ENCODE measurements at regions of chr20 and their contacts with region 1.

Region 1: DNA sequence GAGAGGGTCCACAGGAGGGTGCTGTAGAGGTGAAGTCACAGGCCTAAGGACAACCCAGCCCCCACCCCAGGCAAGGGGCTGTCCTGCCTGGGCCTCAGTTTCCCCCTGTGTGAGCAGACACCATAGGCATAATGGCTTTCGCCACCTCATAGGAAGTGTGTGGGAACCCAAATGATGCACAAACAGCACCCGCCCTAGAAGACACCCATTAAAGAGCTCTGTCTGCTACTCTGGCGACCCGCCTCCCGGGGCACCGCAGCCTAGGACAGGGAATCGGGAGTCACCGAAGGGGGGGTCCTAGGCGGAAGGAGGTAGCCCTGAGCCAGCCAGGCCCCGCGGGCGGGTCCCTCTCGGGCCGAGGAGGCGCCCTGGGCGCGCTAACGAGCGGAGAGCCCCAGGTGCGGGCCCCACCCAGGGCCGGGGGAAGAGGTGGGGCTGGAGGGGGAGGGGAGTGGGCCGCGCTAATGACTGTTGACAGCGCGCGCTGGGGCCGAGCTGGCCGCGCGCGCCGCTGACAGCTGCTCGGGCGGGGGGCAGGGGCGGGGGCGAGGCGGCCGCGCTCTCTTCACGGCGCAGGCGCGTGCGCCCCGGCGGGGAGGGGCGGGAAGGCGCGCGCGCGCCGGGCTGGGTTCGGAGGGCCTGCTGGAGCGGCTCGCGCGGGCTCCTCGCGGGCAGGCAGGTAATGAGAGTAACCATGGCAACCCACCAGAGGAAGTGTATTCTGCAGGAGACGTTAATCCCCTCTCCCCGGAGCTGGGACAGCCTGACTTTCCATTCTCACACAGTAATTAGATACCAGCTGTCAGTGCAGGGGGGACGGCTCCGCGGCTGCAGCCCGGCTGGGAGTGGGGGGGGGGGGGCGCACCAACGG is 48.9 kb downstream of the NOL4L start:
- DNase-seq: peak; percentile 88
- H3K4me3 Mint-ChIP-seq: peak overlapping the region; percentile 67
- H3K27ac Mint-ChIP-seq: peak overlapping the region; percentile 91
- H3K4me1 Mint-ChIP-seq: peaks cover 85% of the 10 kb centered on the region
- H3K27me3 Mint-ChIP-seq: no peaks in the 10 kb centered on the region

Region 2: GRCh38 chr20:32285621-32286371 is 250.4 kb before region 1 on chr20:
- CTCF ChIA-PET with region 1: interaction called, 4 read pairs
- intact Hi-C with region 1: loop called (anchors 2 kb)
- DNase-seq: peak; percentile 78
- H3K4me3 Mint-ChIP-seq: peak overlapping the region; percentile 60
- H3K27ac Mint-ChIP-seq: peak overlapping the region; percentile 92
- H3K4me1 Mint-ChIP-seq: peaks cover 88% of the 10 kb centered on the region
- H3K27me3 Mint-ChIP-seq: no peaks in the 10 kb centered on the region

Region 3: DNA sequence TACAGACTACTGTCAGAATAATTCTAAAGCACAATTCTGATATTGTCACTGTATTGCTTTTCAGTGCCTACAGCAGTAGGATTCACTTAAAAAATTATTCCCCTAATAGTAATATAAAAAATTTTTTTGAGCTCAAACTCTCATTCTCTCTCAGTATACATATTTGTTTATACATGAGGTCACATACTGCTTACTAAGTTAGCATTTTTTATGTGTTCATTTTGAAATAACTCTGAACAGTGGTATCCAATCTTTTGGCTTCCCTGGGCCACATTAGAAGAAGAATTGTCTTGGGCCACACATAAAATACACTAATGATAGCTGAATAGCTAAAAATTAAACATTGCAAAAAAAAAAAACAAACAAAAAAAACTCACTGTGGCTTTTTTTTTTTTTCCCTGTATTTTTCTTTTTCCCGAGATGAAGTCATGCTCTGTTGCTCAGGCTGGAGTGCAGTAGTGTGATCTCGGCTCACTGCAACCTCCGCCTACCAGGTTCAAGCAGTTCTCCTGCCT is 139.5 kb before region 1 on chr20:
- CTCF ChIA-PET with region 1: no interaction called
- intact Hi-C with region 1: no loop called
- DNase-seq: no peak
- H3K4me3 Mint-ChIP-seq: no peak overlapping the region
- H3K27ac Mint-ChIP-seq: no peak overlapping the region
- H3K4me1 Mint-ChIP-seq: peaks cover 31% of the 10 kb centered on the region
- H3K27me3 Mint-ChIP-seq: no peaks in the 10 kb centered on the region

Region 4: GRCh38 chr20:32509639-32510066 is 26.5 kb before region 1 on chr20:
- CTCF ChIA-PET with region 1: interaction called, 3 read pairs
- intact Hi-C with region 1: loop called (anchors 2 kb)
- DNase-seq: peak; percentile 82
- H3K4me3 Mint-ChIP-seq: peak overlapping the region; percentile 71
- H3K27ac Mint-ChIP-seq: peak overlapping the region; percentile 90
- H3K4me1 Mint-ChIP-seq: peaks cover 90% of the 10 kb centered on the region
- H3K27me3 Mint-ChIP-seq: no peaks in the 10 kb centered on the region

Region 5: DNA sequence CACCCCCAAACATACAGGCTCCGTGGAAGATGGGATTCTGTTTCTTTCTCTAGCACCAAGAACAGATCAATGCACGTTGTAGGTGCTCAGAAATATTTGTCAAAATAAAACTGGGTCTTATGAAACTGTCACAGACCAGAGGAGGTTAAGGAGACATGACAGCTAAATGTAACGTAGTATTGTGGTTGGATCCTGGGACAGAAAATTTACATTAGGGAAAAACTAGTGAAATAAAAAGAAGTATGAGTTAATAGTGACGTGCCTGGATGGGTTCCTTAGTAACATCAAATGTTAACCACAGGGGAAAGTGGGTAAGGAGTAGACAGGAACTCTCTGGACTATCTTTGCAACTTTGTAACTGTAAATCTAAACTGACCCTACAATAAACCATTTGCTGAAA is 17.4 kb after region 1 on chr20:
- CTCF ChIA-PET with region 1: interaction called, 4 read pairs
- intact Hi-C with region 1: loop called (anchors 2 kb)
- DNase-seq: no peak
- H3K4me3 Mint-ChIP-seq: no peak overlapping the region
- H3K27ac Mint-ChIP-seq: peak overlapping the region; percentile 78
- H3K4me1 Mint-ChIP-seq: peaks cover 68% of the 10 kb centered on the region
- H3K27me3 Mint-ChIP-seq: no peaks in the 10 kb centered on the region

Region 6: GRCh38 chr20:32660661-32661060 is 124.5 kb after region 1 on chr20:
- CTCF ChIA-PET with region 1: no interaction called
- intact Hi-C with region 1: no loop called
- DNase-seq: no peak
- H3K4me3 Mint-ChIP-seq: no peak overlapping the region
- H3K27ac Mint-ChIP-seq: no peak overlapping the region
- H3K4me1 Mint-ChIP-seq: peaks cover 5% of the 10 kb centered on the region
- H3K27me3 Mint-ChIP-seq: no peaks in the 10 kb centered on the region

Region 7: DNA sequence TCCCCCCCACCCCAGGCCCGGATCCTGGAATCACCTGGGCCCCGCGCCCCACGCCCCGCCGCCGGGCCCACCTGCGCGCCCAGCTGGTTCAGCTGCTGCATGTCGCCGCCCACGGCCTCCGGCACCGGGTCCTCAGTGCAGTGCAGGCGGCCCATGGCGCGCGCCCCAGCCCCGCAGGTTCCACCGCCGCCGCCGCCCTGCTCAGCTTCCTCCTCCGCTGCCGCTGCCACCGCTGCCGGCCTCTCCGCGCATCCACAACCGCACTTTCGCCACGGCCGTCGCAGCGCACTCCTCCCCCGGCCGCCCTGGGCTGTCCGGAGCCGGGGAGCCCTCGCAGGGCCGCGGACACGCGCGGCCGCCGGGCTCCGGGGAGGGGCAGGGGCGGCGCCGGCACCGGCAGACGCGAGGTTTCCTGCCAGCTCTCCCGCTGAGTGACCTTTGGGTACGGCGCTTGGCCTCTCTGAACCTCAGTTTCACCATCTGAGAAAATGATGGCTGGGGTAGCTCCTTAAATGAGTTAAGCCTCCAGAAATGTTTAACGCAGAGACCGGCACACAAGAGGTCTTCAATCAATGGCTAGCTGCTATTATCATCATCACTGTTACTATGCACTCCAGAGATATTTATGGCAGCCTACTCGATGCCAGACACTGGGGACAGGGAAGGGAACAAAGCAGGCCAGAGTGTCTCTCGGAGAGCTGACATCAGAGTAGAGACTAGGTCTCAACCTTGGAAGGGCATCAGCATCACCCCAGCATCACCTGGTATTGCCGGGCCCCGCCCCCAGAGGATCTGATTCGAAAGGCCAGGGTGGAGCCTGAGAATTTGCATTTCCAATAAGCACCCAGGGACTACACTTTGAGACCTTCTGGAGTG is 207.3 kb after region 1 on chr20 and contains the start of gene COMMD7:
- CTCF ChIA-PET with region 1: no interaction called
- intact Hi-C with region 1: loop called (anchors 5 kb)
- DNase-seq: peak; percentile 93
- H3K4me3 Mint-ChIP-seq: peak within 1 kb of the TSS; percentile 94
- H3K27ac Mint-ChIP-seq: peak within 1 kb of the TSS; percentile 95
- H3K4me1 Mint-ChIP-seq: peaks cover 34% of the 10 kb centered on the region
- H3K27me3 Mint-ChIP-seq: no peaks in the 10 kb centered on the region
- total RNA-seq, gene COMMD7: 33.8 to 36.6 TPM

Region 8: DNA sequence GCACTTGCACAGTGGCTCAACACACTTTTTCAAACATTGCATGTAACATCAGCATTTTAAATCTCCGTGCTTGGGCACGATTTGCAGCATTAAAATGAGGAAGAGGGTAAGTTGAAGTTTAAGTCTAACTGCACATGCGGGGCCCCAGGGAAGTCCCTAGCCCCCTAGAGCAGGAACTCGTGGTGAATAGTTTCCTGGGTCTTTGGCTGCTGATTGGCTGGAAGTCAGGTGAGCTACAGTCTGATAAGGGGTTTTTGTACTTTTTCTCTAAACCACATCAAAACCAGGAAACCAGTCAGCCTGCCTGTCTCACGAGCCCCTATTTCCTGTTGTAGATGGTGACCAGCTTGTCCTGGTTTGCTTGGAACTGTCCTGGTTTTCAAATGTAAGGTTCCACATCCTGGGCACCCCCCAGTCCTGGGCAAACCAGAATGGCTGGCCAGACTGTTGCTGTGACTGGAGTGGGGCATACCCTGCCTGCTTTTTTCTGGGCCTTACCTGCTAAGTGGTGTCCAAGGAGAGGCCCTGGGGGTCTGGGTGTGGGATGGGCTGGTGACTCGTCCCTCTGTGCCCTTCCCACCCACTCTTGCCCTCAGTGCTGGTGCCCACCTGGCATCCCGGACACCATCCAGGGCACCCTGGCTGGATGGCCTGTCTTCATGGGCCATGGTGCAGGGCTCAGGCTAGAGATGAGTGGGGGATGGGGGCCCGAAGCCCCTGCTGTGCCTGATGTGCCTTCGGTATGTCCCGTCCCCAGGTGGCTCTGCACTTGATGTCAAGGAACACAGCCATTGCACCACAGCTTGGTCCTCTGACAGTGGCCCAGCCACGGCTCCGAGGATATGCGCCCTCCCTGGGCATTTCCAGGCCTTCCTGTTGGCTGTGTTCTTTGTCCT is 436.2 kb after region 1 on chr20:
- CTCF ChIA-PET with region 1: no interaction called
- intact Hi-C with region 1: loop called (anchors 5 kb)
- DNase-seq: peak; percentile 94
- H3K4me3 Mint-ChIP-seq: no peak overlapping the region
- H3K27ac Mint-ChIP-seq: no peak overlapping the region
- H3K4me1 Mint-ChIP-seq: peaks cover 74% of the 10 kb centered on the region
- H3K27me3 Mint-ChIP-seq: no peaks in the 10 kb centered on the region

Measured in activated naive CD4-positive, alpha-beta T cell treated with anti-CD3 and anti-CD28 coated beads for 36 hours (primary cell).